Activated B cell treated with CpG ODN at 0.5 μM for 24 hours (primary cell): ENCODE measurements at regions of chr1 and their contacts with region 1.

Region 1: GRCh38 chr1:42766741-42767509 is at the starts of genes C1orf50 and P3H1:
- DNase-seq: peak; percentile 99
- ATAC-seq: peak; percentile 91
- H3K4me3 Mint-ChIP-seq: no peak within 1 kb of the TSS
- H3K27ac Mint-ChIP-seq: peak within 1 kb of the TSS; percentile 93
- H3K4me1 Mint-ChIP-seq: peaks cover 33% of the 10 kb centered on the region
- H3K27me3 Mint-ChIP-seq: no peaks in the 10 kb centered on the region
- CTCF ChIP-seq: no peak
- total RNA-seq, gene C1orf50: 10.6 and 13.1 TPM in 2 replicates
- total RNA-seq, gene P3H1: 27.1 and 30.4 TPM in 2 replicates

Region 2: GRCh38 chr1:42456010-42456758 is 310.7 kb before region 1 on chr1 and contains the starts of genes PPCS and ZMYND12:
- CTCF ChIA-PET with region 1: no interaction called
- POLR2A ChIA-PET with region 1: interaction called, 5 read pairs
- intact Hi-C with region 1: loop called (anchors 2 kb)
- DNase-seq: peak; percentile 91
- ATAC-seq: peak; percentile 86
- H3K4me3 Mint-ChIP-seq: peak within 1 kb of the TSS; percentile 91
- H3K27ac Mint-ChIP-seq: peak within 1 kb of the TSS; percentile 98
- H3K4me1 Mint-ChIP-seq: peaks cover 27% of the 10 kb centered on the region
- H3K27me3 Mint-ChIP-seq: no peaks in the 10 kb centered on the region
- CTCF ChIP-seq: no peak
- total RNA-seq, gene PPCS: 63.1 and 65.3 TPM in 2 replicates
- total RNA-seq, gene ZMYND12: 0.53 and 0.56 TPM in 2 replicates

Region 3: DNA sequence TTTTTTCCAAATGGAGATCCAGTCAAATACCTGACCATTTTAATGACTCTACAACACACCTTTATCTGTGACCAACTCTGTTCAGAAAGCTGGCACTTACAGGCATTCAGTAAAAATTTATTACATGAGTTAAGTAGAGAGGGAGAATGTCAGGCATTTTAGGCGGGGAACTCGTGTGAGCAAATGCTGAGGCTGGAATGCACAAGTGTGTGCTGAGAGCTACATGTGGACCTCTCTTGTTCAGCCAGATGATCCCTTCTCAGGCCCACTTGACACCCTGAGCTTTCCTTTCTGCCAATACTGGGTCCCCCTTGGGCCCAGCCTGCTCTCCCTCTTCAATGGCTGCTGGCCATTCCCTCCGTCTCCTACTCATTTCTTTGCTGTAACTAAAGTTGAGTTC is 97.0 kb before region 1 on chr1:
- CTCF ChIA-PET with region 1: no interaction called
- POLR2A ChIA-PET with region 1: no interaction called
- intact Hi-C with region 1: no loop called
- DNase-seq: no peak
- ATAC-seq: no peak
- H3K4me3 Mint-ChIP-seq: no peak overlapping the region
- H3K27ac Mint-ChIP-seq: no peak overlapping the region
- H3K4me1 Mint-ChIP-seq: no peaks in the 10 kb centered on the region
- H3K27me3 Mint-ChIP-seq: no peaks in the 10 kb centered on the region
- CTCF ChIP-seq: no peak

Region 4: DNA sequence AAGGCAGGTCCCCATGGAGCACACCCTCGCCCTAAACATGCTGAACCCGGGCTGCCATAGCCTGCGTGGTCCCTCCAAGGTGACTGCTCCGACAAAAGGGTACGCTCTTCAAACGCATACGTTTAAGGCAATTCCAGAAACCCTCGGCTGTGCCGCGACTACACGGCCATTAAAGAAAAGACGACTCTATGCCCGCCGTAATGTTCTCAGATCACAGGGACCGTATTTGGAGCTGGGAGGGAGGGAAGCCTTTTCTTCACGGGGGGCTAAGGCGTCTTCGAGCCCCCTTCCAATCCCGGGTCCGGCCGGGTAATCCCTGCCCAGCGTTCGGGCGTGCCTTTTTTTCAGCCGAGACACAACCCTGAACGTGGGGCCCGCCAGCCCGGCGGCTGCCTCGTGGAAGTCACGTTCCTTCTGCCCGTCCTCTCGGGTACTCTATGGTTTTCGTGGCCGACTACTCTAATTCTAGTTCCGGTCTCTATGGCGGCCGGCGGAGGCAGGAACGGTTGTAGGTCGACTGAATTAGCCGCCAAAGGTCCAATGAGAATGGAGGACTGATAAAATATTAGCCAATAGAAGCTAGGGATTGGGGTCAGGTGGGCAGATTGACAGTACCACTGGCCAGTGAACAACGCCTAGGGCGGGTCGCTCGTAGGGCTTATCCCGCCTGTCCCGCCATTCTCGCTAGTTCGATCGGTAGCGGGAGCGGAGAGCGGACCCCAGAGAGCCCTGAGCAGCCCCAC is 85.0 kb before region 1 on chr1 and contains the start of gene YBX1:
- CTCF ChIA-PET with region 1: interaction called, 3 read pairs
- POLR2A ChIA-PET with region 1: interaction called, 48 read pairs
- intact Hi-C with region 1: loop called (anchors 1 kb)
- DNase-seq: peak; percentile 88
- ATAC-seq: peak; percentile 88
- H3K4me3 Mint-ChIP-seq: peak within 1 kb of the TSS; percentile 97
- H3K27ac Mint-ChIP-seq: peak within 1 kb of the TSS; percentile 97
- H3K4me1 Mint-ChIP-seq: peaks cover 57% of the 10 kb centered on the region
- H3K27me3 Mint-ChIP-seq: no peaks in the 10 kb centered on the region
- CTCF ChIP-seq: no peak
- total RNA-seq, gene YBX1: 609 and 693 TPM in 2 replicates

Region 5: DNA sequence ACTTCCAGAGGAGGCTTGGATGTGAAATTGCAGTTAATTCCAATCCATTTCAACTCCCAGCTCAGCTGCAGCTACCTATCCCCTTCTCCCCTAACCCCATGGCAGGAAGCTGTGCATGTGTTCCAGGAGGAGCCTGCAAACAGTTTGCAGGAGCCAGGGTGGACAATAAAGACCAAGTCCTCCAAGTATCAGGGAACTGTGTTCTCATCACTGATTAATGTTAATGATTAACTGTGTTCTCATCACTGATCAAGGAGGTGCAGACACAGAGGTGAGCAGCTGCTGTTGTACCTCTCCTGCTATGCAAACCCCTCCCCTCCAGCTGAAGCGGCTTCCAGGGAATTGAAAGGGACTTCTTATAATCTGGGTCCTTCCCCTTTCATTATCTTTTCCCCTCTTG is 46.1 kb before region 1 on chr1:
- CTCF ChIA-PET with region 1: no interaction called
- POLR2A ChIA-PET with region 1: no interaction called
- intact Hi-C with region 1: no loop called
- DNase-seq: no peak
- ATAC-seq: no peak
- H3K4me3 Mint-ChIP-seq: no peak overlapping the region
- H3K27ac Mint-ChIP-seq: no peak overlapping the region
- H3K4me1 Mint-ChIP-seq: no peaks in the 10 kb centered on the region
- H3K27me3 Mint-ChIP-seq: no peaks in the 10 kb centered on the region
- CTCF ChIP-seq: no peak

Region 6: GRCh38 chr1:42745851-42746250 is 21.1 kb before region 1 on chr1:
- CTCF ChIA-PET with region 1: no interaction called
- POLR2A ChIA-PET with region 1: no interaction called
- intact Hi-C with region 1: no loop called
- DNase-seq: no peak
- ATAC-seq: no peak
- H3K4me3 Mint-ChIP-seq: no peak overlapping the region
- H3K27ac Mint-ChIP-seq: no peak overlapping the region
- H3K4me1 Mint-ChIP-seq: no peaks in the 10 kb centered on the region
- H3K27me3 Mint-ChIP-seq: no peaks in the 10 kb centered on the region
- CTCF ChIP-seq: no peak

Region 7: DNA sequence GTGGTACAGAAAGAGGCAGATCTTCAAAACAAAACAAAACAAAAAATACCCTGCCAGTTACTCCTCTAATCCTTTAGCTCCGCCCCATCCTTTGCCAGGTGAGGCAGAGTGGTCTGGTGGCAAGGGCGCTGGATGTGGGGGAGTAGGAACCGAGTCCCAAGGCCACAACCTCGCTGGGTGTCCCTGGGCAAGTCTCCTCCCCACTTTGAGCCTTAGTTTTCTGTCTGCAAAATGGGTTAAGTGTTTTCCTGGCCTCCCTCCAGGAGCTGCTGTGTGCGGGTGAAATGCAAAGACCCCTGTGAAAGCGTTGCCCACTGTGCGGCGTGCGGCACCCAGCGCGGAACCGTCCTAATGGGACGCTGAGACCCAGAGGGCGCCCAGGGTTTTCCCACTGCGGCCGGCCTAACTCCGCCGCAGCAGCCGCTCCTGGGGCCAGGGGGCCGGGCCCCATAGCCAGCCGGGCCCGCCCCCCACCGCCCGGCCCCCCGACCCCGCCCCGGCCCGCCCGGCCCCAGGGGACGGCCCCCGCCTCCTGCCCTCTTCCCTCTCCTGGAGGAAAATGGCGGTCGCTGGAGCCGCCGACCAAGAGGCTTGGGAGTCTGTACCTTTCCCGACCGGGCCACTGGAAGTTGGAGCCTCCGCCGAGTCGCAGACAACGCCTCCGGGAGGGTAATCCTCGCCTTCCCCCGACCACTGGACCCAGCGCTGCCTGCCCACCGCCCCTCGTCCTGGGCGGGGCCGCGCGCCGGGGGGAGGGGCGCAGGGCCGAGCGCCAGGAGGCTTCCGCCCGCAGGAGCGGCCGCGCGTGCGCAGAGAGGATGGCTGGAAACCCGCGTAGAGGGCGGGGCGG is 49.9 kb after region 1 on chr1 and contains the starts of genes ERMAP and SVBP:
- CTCF ChIA-PET with region 1: interaction called, 4 read pairs
- POLR2A ChIA-PET with region 1: interaction called, 32 read pairs
- intact Hi-C with region 1: loop called (anchors 1 kb)
- DNase-seq: peak; percentile 97
- ATAC-seq: peak; percentile 88
- H3K4me3 Mint-ChIP-seq: peak within 1 kb of the TSS; percentile 86
- H3K27ac Mint-ChIP-seq: peak within 1 kb of the TSS; percentile 86
- H3K4me1 Mint-ChIP-seq: peaks cover 20% of the 10 kb centered on the region
- H3K27me3 Mint-ChIP-seq: no peaks in the 10 kb centered on the region
- CTCF ChIP-seq: no peak
- total RNA-seq, gene ERMAP: 7.1 and 10.7 TPM in 2 replicates
- total RNA-seq, gene SVBP: 21.5 and 22.4 TPM in 2 replicates

Region 8: GRCh38 chr1:42958488-42959319 is 191.8 kb after region 1 on chr1 and contains the start of gene SLC2A1:
- CTCF ChIA-PET with region 1: no interaction called
- POLR2A ChIA-PET with region 1: interaction called, 8 read pairs
- intact Hi-C with region 1: loop called (anchors 2 kb)
- DNase-seq: peak; percentile 90
- ATAC-seq: peak; percentile 89
- H3K4me3 Mint-ChIP-seq: peak within 1 kb of the TSS; percentile 99
- H3K27ac Mint-ChIP-seq: peak within 1 kb of the TSS; percentile 99
- H3K4me1 Mint-ChIP-seq: peaks cover 77% of the 10 kb centered on the region
- H3K27me3 Mint-ChIP-seq: peaks cover 1% of the 10 kb centered on the region
- CTCF ChIP-seq: no peak
- total RNA-seq, gene SLC2A1: 105 and 117 TPM in 2 replicates

Region 9: GRCh38 chr1:43650310-43651085 is 883.6 kb after region 1 on chr1:
- CTCF ChIA-PET with region 1: no interaction called
- POLR2A ChIA-PET with region 1: interaction called, 5 read pairs
- intact Hi-C with region 1: loop called (anchors 5 kb)
- DNase-seq: peak; percentile 82
- ATAC-seq: peak; percentile 75
- H3K4me3 Mint-ChIP-seq: peak overlapping the region; percentile 98
- H3K27ac Mint-ChIP-seq: peak overlapping the region; percentile 97
- H3K4me1 Mint-ChIP-seq: peaks cover 46% of the 10 kb centered on the region
- H3K27me3 Mint-ChIP-seq: peaks cover 2% of the 10 kb centered on the region
- CTCF ChIP-seq: no peak

Region 10: GRCh38 chr1:43868741-43869067 is 1101.8 kb after region 1 on chr1:
- CTCF ChIA-PET with region 1: no interaction called
- POLR2A ChIA-PET with region 1: no interaction called
- intact Hi-C with region 1: no loop called
- DNase-seq: no peak
- ATAC-seq: no peak
- H3K4me3 Mint-ChIP-seq: no peak overlapping the region
- H3K27ac Mint-ChIP-seq: no peak overlapping the region
- H3K4me1 Mint-ChIP-seq: no peaks in the 10 kb centered on the region
- H3K27me3 Mint-ChIP-seq: no peaks in the 10 kb centered on the region
- CTCF ChIP-seq: no peak